ENCODE measurements at regions of chr9 and their contacts with region 1.

Region 1: GRCh38 chr9:133532937-133533668 is 1.4 kb upstream of the ADAMTSL2 start:
- DNase-seq: peak; percentile 44 to 93
- H3K4me3 ChIP-seq: no peak overlapping the region
- H3K27ac ChIP-seq: no peak overlapping the region
- H3K4me1 ChIP-seq: peaks cover 0 to 38% (median 21%) of the 10 kb centered on the region in 4 experiments; a peak in 6 of 7 replicates
- H3K27me3 ChIP-seq: peaks cover 0 to 31% (median 18%) of the 10 kb centered on the region in 4 experiments; a peak in 6 of 7 replicates
- CTCF ChIP-seq: peak in 2 of 3 experiments; percentile 82 to 89; a peak in 3 of 4 replicates
- EP300 ChIP-seq: no peak
- POLR2A ChIP-seq: no peak
- RAD21 ChIP-seq: peak; percentile 82 to 86

Region 2: DNA sequence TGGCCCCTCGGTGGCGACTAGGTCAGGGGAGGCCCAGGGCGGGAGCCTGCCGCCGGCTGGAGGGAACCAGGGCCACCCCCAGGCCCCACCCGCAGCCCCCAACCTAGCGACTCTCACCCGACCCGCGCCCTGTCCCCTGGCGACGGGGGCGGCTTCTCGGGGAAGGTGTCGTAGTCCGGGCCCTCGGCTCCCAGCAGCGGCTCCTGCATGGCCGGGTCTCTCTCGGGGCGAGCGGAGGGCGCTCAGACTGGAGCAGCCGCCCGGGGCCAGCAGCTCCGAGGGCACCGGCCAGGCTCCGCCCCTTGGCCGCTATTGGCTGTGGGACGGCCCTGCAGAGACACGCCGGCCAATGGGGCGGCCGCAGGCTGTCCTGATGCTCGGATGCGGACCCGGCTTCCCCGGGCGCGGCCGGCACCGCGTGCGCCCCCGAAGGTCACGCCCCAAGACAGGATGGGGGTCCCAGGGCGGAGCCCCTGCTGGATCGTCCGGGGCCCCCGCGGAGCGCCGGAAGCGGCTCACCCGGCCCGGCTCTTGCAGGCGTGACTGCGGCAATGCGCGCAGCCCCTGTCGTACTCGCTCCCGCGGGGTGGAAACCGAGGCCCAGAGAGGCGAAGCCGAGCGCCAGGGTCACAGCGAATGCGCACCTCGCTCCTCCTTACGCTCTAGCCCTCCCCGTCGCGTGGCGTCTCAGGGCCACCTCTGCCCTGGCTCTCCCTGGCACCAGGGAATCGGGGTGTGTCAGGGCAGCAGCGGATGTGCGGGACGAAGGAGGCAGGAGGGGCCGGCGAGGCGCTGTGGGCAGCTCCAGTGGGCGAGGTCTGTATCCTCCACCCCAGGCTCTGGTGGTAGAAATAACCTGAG is 54.0 kb before region 1 on chr9 and contains the start of gene SLC2A6:
- CTCF ChIA-PET with region 1: no interaction called
- POLR2A ChIA-PET with region 1: no interaction called
- DNase-seq: peak; percentile 74 to 94
- H3K4me3 ChIP-seq: peak within 1 kb of the TSS; percentile 57 to 81 (median 60)
- H3K27ac ChIP-seq: no peak within 1 kb of the TSS
- H3K4me1 ChIP-seq: peaks cover 0 to 7% (median 4%) of the 10 kb centered on the region in 4 experiments; a peak in 6 of 7 replicates
- H3K27me3 ChIP-seq: peaks cover 0 to 4% (median 0%) of the 10 kb centered on the region in 4 experiments; a peak in 2 of 7 replicates
- CTCF ChIP-seq: no peak
- EP300 ChIP-seq: no peak
- POLR2A ChIP-seq: peak in 1 of 2 experiments; percentile 71; a peak in 2 of 3 replicates
- RAD21 ChIP-seq: no peak
- total RNA-seq, gene SLC2A6: 16.6 and 17.9 TPM in 2 replicates

Region 3: GRCh38 chr9:133509179-133510079 is 23.7 kb before region 1 on chr9:
- CTCF ChIA-PET with region 1: interaction called, 10 read pairs
- POLR2A ChIA-PET with region 1: no interaction called
- DNase-seq: no peak
- H3K4me3 ChIP-seq: peak overlapping the region in 1 of 4 experiments; percentile 37; a peak in 2 of 8 replicates
- H3K27ac ChIP-seq: no peak overlapping the region
- H3K4me1 ChIP-seq: peaks cover 0 to 18% (median 14%) of the 10 kb centered on the region in 4 experiments; a peak in 6 of 7 replicates
- H3K27me3 ChIP-seq: peaks cover 0 to 2% (median 0%) of the 10 kb centered on the region in 4 experiments; a peak in 2 of 7 replicates
- CTCF ChIP-seq: no peak
- EP300 ChIP-seq: no peak
- POLR2A ChIP-seq: no peak
- RAD21 ChIP-seq: no peak

Region 4: GRCh38 chr9:133581513-133582343 is 48.6 kb after region 1 on chr9:
- CTCF ChIA-PET with region 1: interaction called, 16 read pairs
- POLR2A ChIA-PET with region 1: no interaction called
- DNase-seq: no peak
- H3K4me3 ChIP-seq: no peak overlapping the region
- H3K27ac ChIP-seq: no peak overlapping the region
- H3K4me1 ChIP-seq: peaks cover 3 to 26% (median 21%) of the 10 kb centered on the region in 4 experiments
- H3K27me3 ChIP-seq: no peaks in the 10 kb centered on the region
- CTCF ChIP-seq: no peak
- EP300 ChIP-seq: no peak
- POLR2A ChIP-seq: no peak
- RAD21 ChIP-seq: no peak

Region 5: GRCh38 chr9:133604214-133604613 is 71.1 kb after region 1 on chr9:
- CTCF ChIA-PET with region 1: interaction called, 11 read pairs
- POLR2A ChIA-PET with region 1: no interaction called
- DNase-seq: no peak
- H3K4me3 ChIP-seq: no peak overlapping the region
- H3K27ac ChIP-seq: no peak overlapping the region
- H3K4me1 ChIP-seq: peaks cover 0 to 7% (median 3%) of the 10 kb centered on the region in 4 experiments; a peak in 5 of 7 replicates
- H3K27me3 ChIP-seq: peaks cover 5 to 15% (median 14%) of the 10 kb centered on the region in 4 experiments
- CTCF ChIP-seq: peak in 2 of 3 experiments; percentile 9 to 27; a peak in 1 of 4 replicates
- EP300 ChIP-seq: no peak
- POLR2A ChIP-seq: no peak
- RAD21 ChIP-seq: peak; percentile 49 to 52

Region 6: GRCh38 chr9:133715866-133716563 is 182.9 kb after region 1 on chr9:
- CTCF ChIA-PET with region 1: interaction called, 19 read pairs
- POLR2A ChIA-PET with region 1: no interaction called
- DNase-seq: peak in 1 of 2 experiments; percentile 80
- H3K4me3 ChIP-seq: no peak overlapping the region
- H3K27ac ChIP-seq: no peak overlapping the region
- H3K4me1 ChIP-seq: peaks cover 0 to 9% (median 3%) of the 10 kb centered on the region in 4 experiments; a peak in 3 of 7 replicates
- H3K27me3 ChIP-seq: no peaks in the 10 kb centered on the region
- CTCF ChIP-seq: peak in 2 of 3 experiments; percentile 73 to 86; a peak in 2 of 4 replicates
- EP300 ChIP-seq: no peak
- POLR2A ChIP-seq: no peak
- RAD21 ChIP-seq: peak; percentile 84 to 87